Calu3 (cell line): ENCODE measurements at regions of chr15 and their contacts with region 1.

Region 1: DNA sequence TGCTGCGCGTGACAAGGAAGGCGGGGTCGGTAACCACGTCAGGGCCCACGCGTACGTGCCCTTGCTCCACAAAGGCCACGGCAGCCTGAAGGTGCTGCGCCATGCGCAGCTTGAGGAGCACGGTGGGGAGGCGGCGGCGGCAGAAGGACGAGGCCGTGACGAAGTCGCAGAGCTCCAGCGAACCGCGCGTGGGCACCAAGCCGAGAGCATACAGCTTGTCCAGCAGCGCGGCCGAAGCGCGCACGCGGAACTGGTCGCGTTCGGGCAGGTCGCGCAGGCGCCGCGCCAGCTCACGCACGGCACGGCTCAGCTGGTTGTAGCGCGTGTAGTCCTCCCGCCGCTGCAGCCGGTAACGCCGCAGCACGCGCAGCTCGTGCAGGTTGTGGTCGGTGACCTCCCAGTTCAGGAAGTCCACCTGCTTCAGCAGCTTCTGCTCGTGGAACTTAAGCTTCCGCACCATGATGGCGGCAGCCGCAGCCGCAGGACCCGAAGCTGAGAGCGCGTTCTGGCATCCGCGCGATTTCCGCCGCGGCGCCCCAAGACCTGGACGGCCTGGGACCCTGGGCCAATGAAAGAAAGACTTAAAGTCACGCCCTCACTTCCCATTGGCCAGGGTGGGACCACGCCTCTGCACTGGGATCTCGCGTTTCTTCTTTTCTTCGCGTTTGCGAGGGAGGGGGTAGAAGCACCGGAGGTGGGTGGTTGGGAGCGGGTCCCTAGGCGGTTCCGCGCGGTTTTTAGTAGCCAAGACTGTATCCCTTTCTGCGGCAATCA is at the start of gene IMP3:
- DNase-seq: peak; percentile 97
- H3K4me3 Mint-ChIP-seq: peak within 1 kb of the TSS; percentile 87
- H3K27ac Mint-ChIP-seq: peak within 1 kb of the TSS; percentile 84
- H3K4me1 Mint-ChIP-seq: peaks cover 28% of the 10 kb centered on the region
- H3K27me3 Mint-ChIP-seq: no peaks in the 10 kb centered on the region
- CTCF ChIP-seq: no peak
- total RNA-seq, gene IMP3: 77.8 and 91.5 TPM in 2 replicates

Region 2: GRCh38 chr15:75453703-75454470 is 186.0 kb before region 1 on chr15:
- CTCF ChIA-PET with region 1: interaction called, 7 read pairs
- intact Hi-C with region 1: loop called (anchors 5 kb)
- DNase-seq: peak; percentile 99
- H3K4me3 Mint-ChIP-seq: peak overlapping the region; percentile 99
- H3K27ac Mint-ChIP-seq: peak overlapping the region; percentile 87
- H3K4me1 Mint-ChIP-seq: peaks cover 17% of the 10 kb centered on the region
- H3K27me3 Mint-ChIP-seq: no peaks in the 10 kb centered on the region
- CTCF ChIP-seq: no peak

Region 3: GRCh38 chr15:75508840-75509532 is 130.9 kb before region 1 on chr15:
- CTCF ChIA-PET with region 1: no interaction called
- intact Hi-C with region 1: loop called (anchors 10 kb)
- DNase-seq: peak; percentile 39
- H3K4me3 Mint-ChIP-seq: no peak overlapping the region
- H3K27ac Mint-ChIP-seq: no peak overlapping the region
- H3K4me1 Mint-ChIP-seq: no peaks in the 10 kb centered on the region
- H3K27me3 Mint-ChIP-seq: no peaks in the 10 kb centered on the region
- CTCF ChIP-seq: peak; percentile 49

Region 4: DNA sequence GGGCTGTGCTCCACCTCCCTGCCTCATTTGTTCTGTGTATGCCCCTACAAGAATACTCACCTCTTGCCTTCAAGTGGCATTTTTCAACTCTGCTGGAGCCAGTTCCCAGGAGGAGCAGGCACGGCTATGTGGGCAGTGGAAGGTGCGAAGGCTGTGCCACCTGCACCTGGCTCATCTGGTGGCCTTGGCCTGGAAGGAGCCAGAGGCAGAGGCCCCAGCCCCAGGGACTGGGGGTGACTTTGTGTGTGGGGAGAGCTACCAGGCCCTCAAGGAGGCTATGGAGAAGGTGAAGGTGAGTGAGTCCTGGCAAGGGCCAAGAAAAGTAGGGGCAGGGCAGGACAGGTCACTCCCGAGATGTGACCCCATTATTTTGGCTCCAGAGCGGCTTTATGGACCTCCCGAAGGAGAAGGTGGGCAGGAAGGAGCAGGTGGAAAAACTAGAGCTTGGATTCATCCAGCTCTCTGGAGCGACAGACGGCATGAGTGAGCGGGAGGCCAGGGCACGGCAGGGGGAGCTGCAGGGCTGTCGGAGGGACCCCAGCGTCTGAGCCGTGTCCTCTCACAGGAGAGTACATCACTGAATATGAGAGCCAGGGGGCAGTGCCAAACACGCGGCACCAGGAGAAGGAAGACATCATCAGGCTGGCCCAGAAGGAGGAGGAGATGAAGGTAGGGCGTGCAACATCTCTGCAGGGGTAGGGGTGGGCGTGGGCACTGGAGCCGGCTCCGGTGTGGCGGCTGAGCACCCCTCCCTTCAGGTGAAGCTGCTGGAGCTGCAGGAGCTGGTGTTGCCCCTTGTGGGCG is 146.1 kb after region 1 on chr15:
- CTCF ChIA-PET with region 1: no interaction called
- intact Hi-C with region 1: no loop called
- DNase-seq: no peak
- H3K4me3 Mint-ChIP-seq: no peak overlapping the region
- H3K27ac Mint-ChIP-seq: no peak overlapping the region
- H3K4me1 Mint-ChIP-seq: no peaks in the 10 kb centered on the region
- H3K27me3 Mint-ChIP-seq: peaks cover 88% of the 10 kb centered on the region
- CTCF ChIP-seq: no peak